ENCODE measurements at regions of chr20 and their contacts with region 1.

Region 1: GRCh38 chr20:35893942-35894341 is 60.4 kb downstream of the SCAND1 start:
- DNase-seq: no peak
- H3K4me3 Mint-ChIP-seq: no peak overlapping the region
- H3K27ac Mint-ChIP-seq: no peak overlapping the region
- H3K4me1 Mint-ChIP-seq: peaks cover 17% of the 10 kb centered on the region
- H3K27me3 Mint-ChIP-seq: no peaks in the 10 kb centered on the region

Region 2: GRCh38 chr20:35699127-35699975 is 194.6 kb before region 1 on chr20 and contains the starts of genes NFS1 and ROMO1:
- intact Hi-C with region 1: no loop called
- DNase-seq: peak; percentile 82
- H3K4me3 Mint-ChIP-seq: peak within 1 kb of the TSS; percentile 94
- H3K27ac Mint-ChIP-seq: peak within 1 kb of the TSS; percentile 94
- H3K4me1 Mint-ChIP-seq: peaks cover 31% of the 10 kb centered on the region
- H3K27me3 Mint-ChIP-seq: no peaks in the 10 kb centered on the region
- total RNA-seq, gene NFS1: 39.1 and 39.8 TPM in 2 replicates
- total RNA-seq, gene ROMO1: 93.0 and 98.4 TPM in 2 replicates

Region 3: GRCh38 chr20:35837577-35838198 is 56.3 kb before region 1 on chr20:
- intact Hi-C with region 1: loop called (anchors 10 kb)
- DNase-seq: no peak
- H3K4me3 Mint-ChIP-seq: no peak overlapping the region
- H3K27ac Mint-ChIP-seq: no peak overlapping the region
- H3K4me1 Mint-ChIP-seq: peaks cover 23% of the 10 kb centered on the region
- H3K27me3 Mint-ChIP-seq: no peaks in the 10 kb centered on the region